Activated CD4-positive, alpha-beta T cell treated with anti-CD3 and anti-CD28 coated beads, Interleukin-2, amount 10 ng/mL, durations not matched to agents 24 days and 14 days (primary cell): ENCODE measurements at regions of chr7 and their contacts with region 1.

Region 1: GRCh38 chr7:130010689-130011412 is 40.3 kb downstream of the ZC3HC1 start:
- DNase-seq: peak; percentile 96
- H3K4me3 Mint-ChIP-seq: no peak overlapping the region
- H3K27ac Mint-ChIP-seq: peak overlapping the region; percentile 57
- H3K4me1 Mint-ChIP-seq: peaks cover 3% of the 10 kb centered on the region
- H3K27me3 Mint-ChIP-seq: no peaks in the 10 kb centered on the region

Region 2: GRCh38 chr7:129664029-129665012 is 346.5 kb before region 1 on chr7:
- intact Hi-C with region 1: loop called (anchors 1 kb)
- DNase-seq: no peak
- H3K4me3 Mint-ChIP-seq: no peak overlapping the region
- H3K27ac Mint-ChIP-seq: no peak overlapping the region
- H3K4me1 Mint-ChIP-seq: peaks cover 4% of the 10 kb centered on the region
- H3K27me3 Mint-ChIP-seq: no peaks in the 10 kb centered on the region